ENCODE measurements at regions of chr5 and their contacts with region 1.

Region 1: GRCh38 chr5:55982957-55983381 is 11.8 kb downstream of the IL6ST start:
- DNase-seq: peak in 7 of 9 donors; percentile 42 to 63 (median 53)
- ATAC-seq: peak; percentile 46
- H3K4me3 ChIP-seq: peak overlapping the region; percentile 44
- H3K4me3 Mint-ChIP-seq: peak overlapping the region; percentile 48 to 96 (median 84)
- H3K27ac ChIP-seq: peak overlapping the region; percentile 67
- H3K27ac Mint-ChIP-seq: peak overlapping the region; percentile 24 to 98 (median 85)
- H3K4me1 ChIP-seq: peaks cover 0 to 63% of the 10 kb centered on the region in 2 donors
- H3K4me1 Mint-ChIP-seq: peaks cover 37 to 94% (median 84%) of the 10 kb centered on the region in 7 donors
- H3K27me3 ChIP-seq: no peaks in the 10 kb centered on the region
- H3K27me3 Mint-ChIP-seq: no peaks in the 10 kb centered on the region

Region 2: DNA sequence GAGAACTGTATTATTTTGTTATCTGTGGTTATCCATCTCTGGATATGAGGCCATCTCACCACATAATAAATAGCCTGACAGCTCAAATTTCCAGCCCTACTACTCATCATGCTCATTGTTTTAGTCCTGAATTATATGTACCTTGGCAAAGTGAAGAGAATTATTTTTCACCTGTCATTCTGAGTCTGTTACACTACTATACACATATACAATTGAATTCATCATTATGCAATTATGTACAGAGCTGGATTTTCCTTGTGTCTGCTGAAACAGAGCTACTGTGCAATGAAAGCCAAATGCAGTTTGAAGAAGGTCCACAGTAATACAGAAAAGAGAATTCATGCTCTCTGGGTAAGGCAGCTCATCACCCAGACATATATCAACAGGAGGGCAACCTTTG is 1026.0 kb before region 1 on chr5:
- CTCF ChIA-PET with region 1: no interaction called
- POLR2A ChIA-PET with region 1: no interaction called
- intact Hi-C with region 1: no loop called
- DNase-seq: no peak
- ATAC-seq: no peak
- H3K4me3 ChIP-seq: no peak overlapping the region
- H3K4me3 Mint-ChIP-seq: no peak overlapping the region
- H3K27ac ChIP-seq: no peak overlapping the region
- H3K27ac Mint-ChIP-seq: peak overlapping the region in 1 of 9 donors; percentile 3
- H3K4me1 ChIP-seq: no peaks in the 10 kb centered on the region
- H3K4me1 Mint-ChIP-seq: peaks cover 0 to 15% (median 0%) of the 10 kb centered on the region in 7 donors
- H3K27me3 ChIP-seq: no peaks in the 10 kb centered on the region
- H3K27me3 Mint-ChIP-seq: peaks cover 0 to 38% (median 0%) of the 10 kb centered on the region in 5 donors

Region 3: GRCh38 chr5:55936100-55936693 is 46.8 kb before region 1 on chr5:
- CTCF ChIA-PET with region 1: interaction called, 4 read pairs
- POLR2A ChIA-PET with region 1: interaction called, 3 read pairs
- intact Hi-C with region 1: loop called in 1 of 2 experiments (anchors 2 kb)
- DNase-seq: peak; percentile 44 to 73 (median 66)
- ATAC-seq: peak; percentile 91
- H3K4me3 ChIP-seq: no peak overlapping the region
- H3K4me3 Mint-ChIP-seq: no peak overlapping the region
- H3K27ac ChIP-seq: no peak overlapping the region
- H3K27ac Mint-ChIP-seq: peak overlapping the region in 6 of 9 donors; percentile 11 to 84 (median 38)
- H3K4me1 ChIP-seq: no peaks in the 10 kb centered on the region
- H3K4me1 Mint-ChIP-seq: peaks cover 0 to 35% (median 14%) of the 10 kb centered on the region in 7 donors
- H3K27me3 ChIP-seq: no peaks in the 10 kb centered on the region
- H3K27me3 Mint-ChIP-seq: no peaks in the 10 kb centered on the region

Region 4: GRCh38 chr5:56050551-56051255 is 67.7 kb after region 1 on chr5:
- CTCF ChIA-PET with region 1: interaction called, 6 read pairs
- POLR2A ChIA-PET with region 1: interaction called, 97 read pairs
- intact Hi-C with region 1: loop called in 1 of 2 experiments (anchors 2 kb)
- DNase-seq: peak in 8 of 9 donors; percentile 4 to 77 (median 66)
- ATAC-seq: peak; percentile 71
- H3K4me3 ChIP-seq: peak overlapping the region; percentile 34
- H3K4me3 Mint-ChIP-seq: peak overlapping the region; percentile 60 to 92 (median 76)
- H3K27ac ChIP-seq: peak overlapping the region; percentile 62
- H3K27ac Mint-ChIP-seq: peak overlapping the region; percentile 77 to 95 (median 89)
- H3K4me1 ChIP-seq: peaks cover 11 to 76% of the 10 kb centered on the region in 2 donors
- H3K4me1 Mint-ChIP-seq: peaks cover 40 to 95% (median 74%) of the 10 kb centered on the region in 7 donors
- H3K27me3 ChIP-seq: no peaks in the 10 kb centered on the region
- H3K27me3 Mint-ChIP-seq: peaks cover 0 to 5% (median 0%) of the 10 kb centered on the region in 5 donors

Region 5: GRCh38 chr5:56070851-56071465 is 88.0 kb after region 1 on chr5:
- CTCF ChIA-PET with region 1: interaction called, 7 read pairs
- POLR2A ChIA-PET with region 1: interaction called, 6 read pairs
- intact Hi-C with region 1: loop called in 1 of 2 experiments (anchors 1 kb)
- DNase-seq: peak in 7 of 9 donors; percentile 46 to 79 (median 69)
- ATAC-seq: peak; percentile 91
- H3K4me3 ChIP-seq: peak overlapping the region; percentile 31
- H3K4me3 Mint-ChIP-seq: peak overlapping the region; percentile 54 to 91 (median 78)
- H3K27ac ChIP-seq: peak overlapping the region; percentile 77
- H3K27ac Mint-ChIP-seq: peak overlapping the region; percentile 65 to 99 (median 91)
- H3K4me1 ChIP-seq: peaks cover 7 to 72% of the 10 kb centered on the region in 2 donors
- H3K4me1 Mint-ChIP-seq: peaks cover 41 to 95% (median 80%) of the 10 kb centered on the region in 7 donors
- H3K27me3 ChIP-seq: no peaks in the 10 kb centered on the region
- H3K27me3 Mint-ChIP-seq: peaks cover 0 to 3% (median 0%) of the 10 kb centered on the region in 5 donors

Region 6: GRCh38 chr5:56105511-56106291 is 122.7 kb after region 1 on chr5:
- CTCF ChIA-PET with region 1: interaction called, 18 read pairs
- POLR2A ChIA-PET with region 1: interaction called, 5 read pairs
- intact Hi-C with region 1: loop called in 1 of 2 experiments (anchors 2 kb)
- DNase-seq: peak in 2 of 9 donors; percentile 24 to 44
- ATAC-seq: no peak
- H3K4me3 ChIP-seq: no peak overlapping the region
- H3K4me3 Mint-ChIP-seq: peak overlapping the region; percentile 49 to 85 (median 70)
- H3K27ac ChIP-seq: peak overlapping the region; percentile 56
- H3K27ac Mint-ChIP-seq: peak overlapping the region; percentile 70 to 100 (median 90)
- H3K4me1 ChIP-seq: peaks cover 0 to 60% of the 10 kb centered on the region in 2 donors
- H3K4me1 Mint-ChIP-seq: peaks cover 33 to 95% (median 73%) of the 10 kb centered on the region in 7 donors
- H3K27me3 ChIP-seq: no peaks in the 10 kb centered on the region
- H3K27me3 Mint-ChIP-seq: no peaks in the 10 kb centered on the region

Region 7: DNA sequence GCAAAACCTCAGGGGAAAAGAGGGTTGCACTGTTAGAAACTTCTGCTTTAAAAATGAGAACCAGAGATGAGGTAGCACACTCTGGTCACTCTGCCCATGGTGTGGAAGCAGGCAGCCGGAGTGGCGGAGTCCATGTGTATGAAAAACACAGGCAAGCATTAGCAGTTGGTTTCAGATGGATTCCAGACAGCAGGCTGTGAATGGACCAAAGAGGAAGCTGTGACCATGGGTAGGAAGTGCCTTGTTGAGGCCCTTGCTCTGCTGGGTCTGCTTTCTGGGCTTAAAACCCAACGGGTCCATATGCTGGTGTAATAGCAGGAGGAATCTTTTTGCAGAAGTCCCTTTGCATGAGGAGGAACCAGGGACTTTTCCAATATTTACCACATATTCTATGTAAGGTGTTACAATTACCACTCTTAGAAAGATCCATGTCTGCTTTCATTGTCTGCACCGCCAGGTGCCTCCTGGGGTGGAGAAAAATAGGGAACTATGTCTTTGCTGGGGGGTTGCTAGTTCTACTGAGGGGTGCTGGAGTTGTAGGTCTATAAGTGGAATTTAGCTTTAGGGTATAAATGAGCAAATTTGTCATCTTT is 173.1 kb after region 1 on chr5:
- CTCF ChIA-PET with region 1: interaction called, 10 read pairs
- POLR2A ChIA-PET with region 1: interaction called, 6 read pairs
- intact Hi-C with region 1: loop called in 1 of 2 experiments (anchors 1 kb)
- DNase-seq: no peak
- ATAC-seq: peak; percentile 48
- H3K4me3 ChIP-seq: no peak overlapping the region
- H3K4me3 Mint-ChIP-seq: peak overlapping the region; percentile 25 to 96 (median 94)
- H3K27ac ChIP-seq: peak overlapping the region; percentile 61
- H3K27ac Mint-ChIP-seq: peak overlapping the region; percentile 87 to 98 (median 95)
- H3K4me1 ChIP-seq: peaks cover 11 to 71% of the 10 kb centered on the region in 2 donors
- H3K4me1 Mint-ChIP-seq: peaks cover 60 to 89% (median 79%) of the 10 kb centered on the region in 7 donors
- H3K27me3 ChIP-seq: peaks cover 0 to 2% of the 10 kb centered on the region in 2 donors
- H3K27me3 Mint-ChIP-seq: no peaks in the 10 kb centered on the region

Region 8: GRCh38 chr5:56838409-56839039 is 855.6 kb after region 1 on chr5:
- CTCF ChIA-PET with region 1: interaction called, 6 read pairs
- POLR2A ChIA-PET with region 1: no interaction called
- intact Hi-C with region 1: loop called in 1 of 2 experiments (anchors 2 kb)
- DNase-seq: peak in 7 of 9 donors; percentile 33 to 61 (median 48)
- ATAC-seq: peak; percentile 75
- H3K4me3 ChIP-seq: no peak overlapping the region
- H3K4me3 Mint-ChIP-seq: peak overlapping the region; percentile 19 to 79 (median 57)
- H3K27ac ChIP-seq: peak overlapping the region; percentile 42
- H3K27ac Mint-ChIP-seq: peak overlapping the region; percentile 8 to 95 (median 78)
- H3K4me1 ChIP-seq: peaks cover 8 to 87% of the 10 kb centered on the region in 2 donors
- H3K4me1 Mint-ChIP-seq: peaks cover 63 to 95% (median 90%) of the 10 kb centered on the region in 7 donors
- H3K27me3 ChIP-seq: no peaks in the 10 kb centered on the region
- H3K27me3 Mint-ChIP-seq: no peaks in the 10 kb centered on the region